GM12878 (cell line): ENCODE measurements at regions of chr4 and their contacts with region 1.

Region 1: GRCh38 chr4:99054428-99054994 is 34.1 kb downstream of the ADH5 start:
- DNase-seq: peak; percentile 26
- ATAC-seq: peak; percentile 79
- H3K4me3 ChIP-seq: no peak overlapping the region
- H3K27ac ChIP-seq: no peak overlapping the region
- H3K4me1 ChIP-seq: peaks cover 10% of the 10 kb centered on the region
- H3K27me3 ChIP-seq: no peaks in the 10 kb centered on the region
- CTCF ChIP-seq: no peak
- EP300 ChIP-seq: 0 out of 4 replicates have a peak, but pooled peaks of 1 of the 2 experiments have one; percentile 41
- POLR2A ChIP-seq: no peak
- RAD21 ChIP-seq: no peak

Region 2: DNA sequence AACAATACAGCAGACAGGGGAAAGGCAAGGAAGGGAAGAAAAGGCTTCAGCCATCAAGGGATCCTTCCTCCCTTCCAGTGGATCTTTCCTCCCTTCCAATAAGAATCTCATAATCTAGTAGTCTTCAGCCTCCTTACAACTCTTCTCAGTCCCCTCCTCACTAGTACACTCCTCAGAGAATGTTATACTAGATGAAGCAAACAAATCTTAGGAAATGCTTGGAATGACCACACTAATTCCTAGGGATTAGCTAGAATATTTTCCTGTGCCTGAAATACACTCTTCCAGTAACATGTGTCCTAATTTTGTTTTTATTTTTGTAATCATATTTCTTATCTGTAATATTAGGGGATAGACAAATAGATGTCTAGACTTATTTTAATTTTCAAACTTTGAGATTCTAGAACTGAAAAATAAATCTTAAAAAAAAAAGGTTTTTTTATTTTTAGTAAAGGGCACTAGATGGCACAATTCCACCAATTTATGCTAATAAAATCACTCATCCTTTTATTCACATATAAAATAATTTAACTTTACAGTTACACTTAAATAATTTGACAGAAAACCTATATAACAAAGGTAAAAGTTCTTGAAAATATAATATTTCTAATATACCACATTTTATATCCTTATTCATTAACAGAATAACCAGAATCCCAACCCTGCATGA is 904.3 kb before region 1 on chr4:
- CTCF ChIA-PET with region 1: interaction called, 11 read pairs
- POLR2A ChIA-PET with region 1: no interaction called
- RAD21 ChIA-PET with region 1: no interaction called
- SMC1A ChIA-PET with region 1: interaction called, 12 read pairs
- in situ Hi-C with region 1: loop called (anchors 10 kb)
- intact Hi-C with region 1: loop called (anchors 5 kb)
- DNase-seq: no peak
- ATAC-seq: no peak
- H3K4me3 ChIP-seq: no peak overlapping the region
- H3K27ac ChIP-seq: no peak overlapping the region
- H3K4me1 ChIP-seq: no peaks in the 10 kb centered on the region
- H3K27me3 ChIP-seq: no peaks in the 10 kb centered on the region; a peak in 1 of 4 replicates
- CTCF ChIP-seq: no peak; a peak in 1 of 6 replicates
- EP300 ChIP-seq: no peak
- POLR2A ChIP-seq: no peak
- RAD21 ChIP-seq: no peak

Region 3: GRCh38 chr4:98928505-98929340 is 125.8 kb before region 1 on chr4 and contains the start of gene EIF4E:
- CTCF ChIA-PET with region 1: interaction called, 16 read pairs
- POLR2A ChIA-PET with region 1: no interaction called
- RAD21 ChIA-PET with region 1: interaction called, 8 read pairs
- SMC1A ChIA-PET with region 1: interaction called, 4 read pairs
- in situ Hi-C with region 1: no loop called
- intact Hi-C with region 1: no loop called
- DNase-seq: peak; percentile 96
- ATAC-seq: peak; percentile 82
- H3K4me3 ChIP-seq: peak within 1 kb of the TSS; percentile 95
- H3K27ac ChIP-seq: peak within 1 kb of the TSS; percentile 96
- H3K4me1 ChIP-seq: peaks cover 8% of the 10 kb centered on the region
- H3K27me3 ChIP-seq: no peaks in the 10 kb centered on the region
- CTCF ChIP-seq: peak; percentile 20 to 38 (median 27); a peak in 5 of 6 replicates
- EP300 ChIP-seq: 0 out of 4 replicates have a peak, but pooled peaks of 1 of the 2 experiments have one; percentile 10
- POLR2A ChIP-seq: peak; percentile 91
- RAD21 ChIP-seq: no peak
- polyA plus RNA-seq, gene EIF4E: 167 to 372 TPM

Region 4: GRCh38 chr4:99008051-99008450 is 46.5 kb before region 1 on chr4:
- CTCF ChIA-PET with region 1: interaction called, 287 read pairs
- POLR2A ChIA-PET with region 1: no interaction called
- RAD21 ChIA-PET with region 1: interaction called, 5 read pairs
- SMC1A ChIA-PET with region 1: interaction called, 166 read pairs
- in situ Hi-C with region 1: no loop called
- intact Hi-C with region 1: no loop called
- DNase-seq: no peak
- ATAC-seq: no peak
- H3K4me3 ChIP-seq: no peak overlapping the region
- H3K27ac ChIP-seq: no peak overlapping the region
- H3K4me1 ChIP-seq: no peaks in the 10 kb centered on the region
- H3K27me3 ChIP-seq: no peaks in the 10 kb centered on the region
- CTCF ChIP-seq: no peak
- EP300 ChIP-seq: no peak
- POLR2A ChIP-seq: no peak
- RAD21 ChIP-seq: no peak

Region 5: GRCh38 chr4:99067617-99068016 is 13.1 kb after region 1 on chr4:
- CTCF ChIA-PET with region 1: interaction called, 17 read pairs
- POLR2A ChIA-PET with region 1: no interaction called
- RAD21 ChIA-PET with region 1: interaction called, 5 read pairs
- SMC1A ChIA-PET with region 1: interaction called, 4 read pairs
- in situ Hi-C with region 1: no loop called
- intact Hi-C with region 1: no loop called
- DNase-seq: no peak
- ATAC-seq: no peak
- H3K4me3 ChIP-seq: no peak overlapping the region
- H3K27ac ChIP-seq: no peak overlapping the region
- H3K4me1 ChIP-seq: no peaks in the 10 kb centered on the region
- H3K27me3 ChIP-seq: no peaks in the 10 kb centered on the region
- CTCF ChIP-seq: no peak
- EP300 ChIP-seq: no peak
- POLR2A ChIP-seq: no peak
- RAD21 ChIP-seq: no peak

Region 6: DNA sequence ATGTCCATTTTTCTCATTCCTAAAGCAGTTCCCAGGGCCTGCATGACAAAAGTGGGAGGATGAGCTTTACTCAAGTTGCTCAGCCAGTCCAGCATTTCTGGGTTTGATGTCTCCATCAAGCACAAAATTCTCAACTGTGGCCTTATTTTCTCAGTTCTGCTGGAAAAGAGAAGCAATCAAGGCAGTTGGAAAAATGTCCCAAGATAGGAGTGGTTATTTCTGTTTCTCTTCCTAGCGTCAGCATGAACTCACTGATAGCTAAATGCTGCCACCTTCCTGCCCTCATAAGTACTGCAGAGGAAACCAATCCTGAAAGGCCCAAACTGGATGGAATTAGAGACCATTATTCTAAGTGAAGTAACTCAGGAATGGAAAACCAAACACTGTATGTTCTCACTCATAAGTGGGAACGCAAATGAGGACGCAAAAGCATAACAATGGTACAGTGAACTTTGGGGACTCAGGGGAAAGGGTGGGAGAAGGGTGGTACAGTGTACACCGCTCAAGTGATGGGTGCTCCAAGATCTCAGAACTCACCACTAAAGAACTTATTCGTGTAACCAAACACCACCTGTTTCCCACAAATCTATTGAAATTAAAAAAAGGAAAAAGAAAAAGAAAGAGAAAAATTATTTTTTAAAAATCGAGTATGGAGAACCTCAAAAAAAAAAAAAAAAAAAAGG is 351.1 kb after region 1 on chr4:
- CTCF ChIA-PET with region 1: interaction called, 19 read pairs
- POLR2A ChIA-PET with region 1: no interaction called
- RAD21 ChIA-PET with region 1: interaction called, 10 read pairs
- SMC1A ChIA-PET with region 1: interaction called, 7 read pairs
- in situ Hi-C with region 1: no loop called
- intact Hi-C with region 1: no loop called
- DNase-seq: peak; percentile 38
- ATAC-seq: peak; percentile 40
- H3K4me3 ChIP-seq: no peak overlapping the region
- H3K27ac ChIP-seq: peak overlapping the region; percentile 28; the same call in 1 of the 2 replicates
- H3K4me1 ChIP-seq: peaks cover 16% of the 10 kb centered on the region
- H3K27me3 ChIP-seq: no peaks in the 10 kb centered on the region
- CTCF ChIP-seq: peak; percentile 86 to 90 (median 87)
- EP300 ChIP-seq: no peak
- POLR2A ChIP-seq: no peak
- RAD21 ChIP-seq: peak; percentile 97